Heart right ventricle (tissue), 16 donors: ENCODE measurements at regions of chrX and their contacts with region 1.

Region 1: GRCh38 chrX:27575565-27575964 is 14.6 kb upstream of the DCAF8L2 start:
- DNase-seq: no peak
- ATAC-seq: no peak
- H3K4me3 ChIP-seq: no peak overlapping the region
- H3K27ac ChIP-seq: no peak overlapping the region
- H3K4me1 ChIP-seq: no peaks in the 10 kb centered on the region
- H3K27me3 ChIP-seq: no peaks in the 10 kb centered on the region
- CTCF ChIP-seq: no peak

Region 2: DNA sequence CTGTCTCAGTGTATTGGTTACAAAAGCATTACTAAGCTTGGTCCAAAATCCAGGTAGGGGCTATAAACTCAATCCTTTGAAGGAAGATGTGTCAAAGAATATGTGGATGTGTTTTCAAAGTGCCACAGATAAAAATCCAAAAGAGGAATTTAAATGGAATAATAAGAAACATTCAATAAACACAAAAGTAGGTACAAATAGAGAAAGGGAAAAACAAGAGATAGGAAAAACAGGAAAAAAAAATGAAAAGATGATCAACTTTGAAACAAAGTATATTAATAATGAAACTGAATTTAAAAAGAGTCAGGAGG is 176.5 kb before region 1 on chrX:
- intact Hi-C with region 1: no loop called
- DNase-seq: no peak
- ATAC-seq: no peak
- H3K4me3 ChIP-seq: no peak overlapping the region
- H3K27ac ChIP-seq: no peak overlapping the region
- H3K4me1 ChIP-seq: no peaks in the 10 kb centered on the region
- H3K27me3 ChIP-seq: no peaks in the 10 kb centered on the region
- CTCF ChIP-seq: no peak

Region 3: GRCh38 chrX:27591938-27592337 is 16.4 kb after region 1 on chrX:
- intact Hi-C with region 1: loop called in 1 of 10 experiments (anchors 1 kb)
- DNase-seq: no peak
- ATAC-seq: no peak
- H3K4me3 ChIP-seq: no peak overlapping the region
- H3K27ac ChIP-seq: no peak overlapping the region
- H3K4me1 ChIP-seq: no peaks in the 10 kb centered on the region
- H3K27me3 ChIP-seq: no peaks in the 10 kb centered on the region
- CTCF ChIP-seq: no peak